ENCODE measurements at regions of chr12 and their contacts with region 1.

Region 1: DNA sequence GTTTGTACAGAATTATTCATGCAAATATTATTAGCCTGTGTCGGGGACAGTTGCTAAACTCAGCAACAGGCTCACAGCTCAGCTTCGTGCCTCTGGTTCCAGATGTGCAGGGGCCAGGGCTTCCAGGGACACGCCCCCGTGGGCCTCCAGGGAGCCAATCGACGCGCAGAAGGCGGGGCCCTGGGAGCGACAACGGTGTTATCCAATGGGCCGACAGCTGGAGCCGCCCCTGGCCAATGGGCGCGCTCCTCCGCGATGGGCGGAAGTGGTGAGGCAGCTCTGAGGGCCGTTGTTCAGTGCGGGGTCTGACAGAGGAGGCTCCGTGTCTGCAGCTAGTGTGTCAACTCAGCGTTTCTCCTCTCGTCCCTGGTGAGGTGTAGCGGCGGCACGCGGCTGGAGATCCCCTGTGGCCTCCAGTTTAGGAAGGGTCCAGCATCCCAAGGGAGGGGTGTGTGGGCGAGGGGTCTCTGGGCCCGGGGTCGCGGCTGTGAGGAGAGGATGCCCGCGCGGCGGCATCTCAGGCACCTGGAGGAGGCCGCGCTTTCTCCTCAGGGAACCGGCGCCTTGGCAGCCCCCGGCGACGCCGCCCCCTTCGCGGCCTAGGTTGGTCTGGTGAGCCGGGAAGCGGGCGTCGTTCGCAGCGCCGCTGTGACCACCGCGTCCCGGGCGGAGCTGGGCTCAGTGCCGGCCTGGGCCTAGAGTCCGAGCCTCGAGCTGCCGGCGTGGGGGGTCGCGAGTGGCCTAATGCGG is at the start of gene TRAFD1:
- DNase-seq: peak; percentile 96
- ATAC-seq: peak; percentile 98
- H3K4me3 Mint-ChIP-seq: peak within 1 kb of the TSS; percentile 87
- H3K27ac Mint-ChIP-seq: peak within 1 kb of the TSS; percentile 78
- H3K4me1 Mint-ChIP-seq: peaks cover 45% of the 10 kb centered on the region
- H3K27me3 Mint-ChIP-seq: no peaks in the 10 kb centered on the region
- CTCF ChIP-seq: no peak
- total RNA-seq, gene TRAFD1: 47.8 and 51.0 TPM in 2 replicates

Region 2: GRCh38 chr12:111904446-111904975 is 220.9 kb before region 1 on chr12:
- CTCF ChIA-PET with region 1: no interaction called
- POLR2A ChIA-PET with region 1: interaction called, 10 read pairs
- intact Hi-C with region 1: no loop called
- DNase-seq: no peak
- ATAC-seq: no peak
- H3K4me3 Mint-ChIP-seq: no peak overlapping the region
- H3K27ac Mint-ChIP-seq: no peak overlapping the region
- H3K4me1 Mint-ChIP-seq: no peaks in the 10 kb centered on the region
- H3K27me3 Mint-ChIP-seq: no peaks in the 10 kb centered on the region
- CTCF ChIP-seq: no peak

Region 3: GRCh38 chr12:112096667-112097066 is 28.8 kb before region 1 on chr12:
- CTCF ChIA-PET with region 1: no interaction called
- POLR2A ChIA-PET with region 1: interaction called, 22 read pairs
- intact Hi-C with region 1: loop called (anchors 2 kb)
- DNase-seq: no peak
- ATAC-seq: peak; percentile 37
- H3K4me3 Mint-ChIP-seq: no peak overlapping the region
- H3K27ac Mint-ChIP-seq: peak overlapping the region; percentile 75
- H3K4me1 Mint-ChIP-seq: peaks cover 24% of the 10 kb centered on the region
- H3K27me3 Mint-ChIP-seq: no peaks in the 10 kb centered on the region
- CTCF ChIP-seq: no peak

Region 4: DNA sequence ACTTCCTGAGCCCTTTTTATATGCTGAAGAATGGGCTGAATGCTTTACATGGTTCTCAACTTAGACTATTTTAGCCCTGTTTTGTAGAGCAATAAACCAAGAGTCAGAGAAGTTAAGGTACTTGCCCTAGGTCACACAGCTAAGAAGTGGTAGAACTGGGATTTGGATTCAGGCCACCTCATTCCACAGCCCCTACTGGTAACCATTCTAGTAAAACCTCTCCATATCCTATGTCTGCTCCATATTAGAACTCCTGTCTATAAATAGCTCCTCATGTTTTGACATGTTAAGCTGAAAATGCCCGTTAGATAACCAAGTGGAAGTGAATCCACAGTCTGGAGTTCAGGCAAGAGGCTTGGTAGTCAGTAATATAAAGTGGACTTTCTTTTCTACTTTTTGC is 145.2 kb after region 1 on chr12:
- CTCF ChIA-PET with region 1: no interaction called
- POLR2A ChIA-PET with region 1: no interaction called
- intact Hi-C with region 1: no loop called
- DNase-seq: no peak
- ATAC-seq: no peak
- H3K4me3 Mint-ChIP-seq: no peak overlapping the region
- H3K27ac Mint-ChIP-seq: no peak overlapping the region
- H3K4me1 Mint-ChIP-seq: no peaks in the 10 kb centered on the region
- H3K27me3 Mint-ChIP-seq: no peaks in the 10 kb centered on the region
- CTCF ChIP-seq: no peak

Region 5: DNA sequence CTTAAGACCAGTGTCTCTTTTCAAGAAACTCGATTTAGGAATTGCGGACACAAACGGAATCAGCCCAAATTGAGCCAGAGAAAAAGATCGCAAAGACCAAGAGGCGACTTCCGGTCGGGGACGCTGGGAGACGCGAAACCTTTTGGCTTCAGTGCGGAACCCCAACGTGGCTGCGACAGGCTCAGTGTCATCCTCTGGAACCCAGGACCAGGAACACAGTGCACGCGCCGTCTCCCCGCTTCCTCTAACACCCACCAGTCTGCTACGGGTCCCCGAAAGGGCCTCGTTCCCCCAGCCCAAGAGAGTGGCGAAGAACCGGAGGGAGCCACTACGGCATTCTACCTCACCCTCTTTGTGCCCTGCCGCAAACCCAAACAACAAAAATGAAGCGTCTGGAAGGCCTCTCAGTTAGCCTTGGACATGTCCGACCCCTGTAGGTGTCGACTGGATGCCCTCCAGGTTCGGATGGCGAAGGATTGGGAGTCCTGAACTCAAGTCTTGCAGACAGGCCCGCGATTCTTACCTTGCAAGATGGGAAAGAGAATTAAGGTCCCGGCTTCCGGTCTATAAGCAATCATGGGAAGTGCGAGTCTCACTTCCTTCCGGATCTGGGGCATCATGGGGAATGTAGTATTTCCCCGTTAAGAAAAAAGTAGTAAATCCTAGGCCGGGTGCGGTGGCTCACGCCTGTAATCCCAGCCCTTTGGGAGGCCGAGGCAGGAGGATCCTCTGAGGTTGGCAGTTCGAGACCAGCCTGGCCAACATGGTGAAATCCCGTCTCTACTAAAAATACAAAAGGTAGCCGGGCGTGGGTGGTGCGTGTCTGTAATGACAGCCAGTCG is 283.9 kb after region 1 on chr12 and contains the start of gene RPL6:
- CTCF ChIA-PET with region 1: no interaction called
- POLR2A ChIA-PET with region 1: no interaction called
- intact Hi-C with region 1: loop called (anchors 10 kb)
- DNase-seq: peak; percentile 70
- ATAC-seq: peak; percentile 91
- H3K4me3 Mint-ChIP-seq: peak within 1 kb of the TSS; percentile 100
- H3K27ac Mint-ChIP-seq: peak within 1 kb of the TSS; percentile 99
- H3K4me1 Mint-ChIP-seq: peaks cover 36% of the 10 kb centered on the region
- H3K27me3 Mint-ChIP-seq: no peaks in the 10 kb centered on the region
- CTCF ChIP-seq: no peak
- total RNA-seq, gene RPL6: 2,197 and 2,546 TPM in 2 replicates